H1 (cell line): ENCODE measurements at regions of chr4 and their contacts with region 1.

Region 1: DNA sequence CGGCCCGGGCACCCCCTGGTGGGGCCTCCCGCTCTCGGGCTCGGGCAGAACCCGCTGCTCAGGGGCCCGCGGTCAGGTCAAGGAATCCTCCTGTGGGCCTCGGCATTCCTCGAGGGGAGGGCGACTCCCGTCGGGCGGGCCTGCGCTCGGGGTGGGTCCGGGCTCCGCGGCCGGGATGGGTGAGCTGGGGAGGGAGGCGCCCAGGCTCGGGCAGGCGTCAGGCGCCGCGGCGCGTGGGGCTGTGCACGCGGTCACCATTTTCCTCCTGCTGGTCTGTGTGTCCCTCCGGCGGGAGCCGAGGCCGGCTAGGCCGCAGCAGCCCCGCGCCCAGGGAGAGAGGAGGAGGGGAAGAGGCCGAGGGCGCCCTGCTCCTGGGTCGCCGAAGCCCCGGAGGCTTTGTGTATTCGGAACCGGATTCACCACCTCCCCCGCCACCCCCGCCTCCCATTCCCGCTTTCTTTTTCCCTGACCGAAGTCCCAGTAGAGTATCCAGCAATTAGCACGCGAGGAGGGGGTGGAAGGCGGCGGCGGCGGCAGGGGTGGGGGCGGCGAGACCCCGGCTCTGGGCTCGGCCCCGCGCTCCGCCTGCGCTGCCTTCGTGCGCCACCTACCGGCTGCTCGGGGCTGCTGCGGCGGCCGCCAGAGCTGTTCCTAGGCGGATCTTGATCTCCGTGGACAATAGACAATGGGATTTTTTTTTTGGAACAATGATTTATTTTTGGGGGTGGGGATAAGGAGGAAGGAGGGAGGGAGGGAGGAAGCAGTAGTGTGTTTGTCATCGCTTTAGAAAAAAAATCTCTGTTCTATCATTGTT is 99.0 kb upstream of the MAML3 start:
- DNase-seq: peak in 1 of 2 experiments; percentile 87
- H3K4me3 ChIP-seq: peak overlapping the region; percentile 34 to 66 (median 38)
- H3K27ac ChIP-seq: no peak overlapping the region
- H3K4me1 ChIP-seq: peaks cover 0 to 10% (median 6%) of the 10 kb centered on the region in 4 experiments; a peak in 6 of 7 replicates
- H3K27me3 ChIP-seq: peaks cover 0 to 7% (median 4%) of the 10 kb centered on the region in 4 experiments; a peak in 3 of 7 replicates
- CTCF ChIP-seq: peak; percentile 79 to 94 (median 93)
- EP300 ChIP-seq: no peak
- POLR2A ChIP-seq: no peak
- RAD21 ChIP-seq: peak; percentile 86 to 91

Region 2: DNA sequence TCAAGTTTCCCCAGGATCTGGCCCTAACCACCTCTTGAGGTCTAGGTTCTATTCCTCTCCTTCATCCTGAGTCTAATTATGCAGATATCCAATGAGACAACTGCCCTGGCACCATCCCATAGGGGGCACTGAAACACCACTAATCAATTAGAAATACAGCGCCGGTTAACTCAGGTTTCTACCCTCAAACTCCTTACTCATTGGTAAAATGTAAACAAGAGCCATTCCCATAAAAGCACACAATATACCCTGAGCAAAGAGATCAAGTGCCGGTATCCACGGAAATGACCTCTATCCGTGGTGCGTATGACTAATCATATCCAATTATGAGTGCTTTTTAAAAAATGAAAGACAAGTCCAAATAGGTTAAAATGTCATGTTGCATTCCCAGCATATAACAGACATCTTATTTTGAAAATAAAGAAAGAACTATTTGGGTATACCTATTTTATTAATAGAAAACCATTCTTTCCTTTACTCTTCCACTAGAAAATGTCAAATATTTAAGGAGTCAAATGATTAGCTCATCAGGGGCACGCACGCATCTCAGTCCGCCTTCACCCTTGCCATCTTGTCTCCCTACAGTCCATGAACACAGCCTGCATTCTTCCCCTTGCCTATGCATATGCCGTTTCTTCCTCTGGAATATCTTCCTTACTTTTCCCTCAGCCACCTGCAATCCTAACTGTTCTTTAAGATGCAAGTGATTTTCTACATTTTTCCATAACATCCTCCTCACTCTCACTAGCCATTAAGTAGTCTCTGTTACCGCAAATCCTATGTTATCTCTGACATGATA is 240.1 kb before region 1 on chr4:
- CTCF ChIA-PET with region 1: interaction called, 28 read pairs
- POLR2A ChIA-PET with region 1: no interaction called
- DNase-seq: peak in 1 of 2 experiments; percentile 70
- H3K4me3 ChIP-seq: no peak overlapping the region
- H3K27ac ChIP-seq: no peak overlapping the region
- H3K4me1 ChIP-seq: peaks cover 0 to 6% (median 1%) of the 10 kb centered on the region in 4 experiments; a peak in 2 of 7 replicates
- H3K27me3 ChIP-seq: no peaks in the 10 kb centered on the region
- CTCF ChIP-seq: peak in 2 of 3 experiments; percentile 78 to 79; a peak in 3 of 4 replicates
- EP300 ChIP-seq: no peak
- POLR2A ChIP-seq: no peak
- RAD21 ChIP-seq: peak; percentile 92 to 96

Region 3: GRCh38 chr4:140153718-140154571 is 99.0 kb before region 1 on chr4 and contains the start of gene MAML3:
- CTCF ChIA-PET with region 1: interaction called, 10 read pairs
- POLR2A ChIA-PET with region 1: interaction called, 11 read pairs
- DNase-seq: peak; percentile 47 to 94
- H3K4me3 ChIP-seq: peak within 1 kb of the TSS; percentile 86 to 98 (median 94)
- H3K27ac ChIP-seq: no peak within 1 kb of the TSS
- H3K4me1 ChIP-seq: peaks cover 0 to 4% (median 2%) of the 10 kb centered on the region in 4 experiments; a peak in 4 of 7 replicates
- H3K27me3 ChIP-seq: peaks cover 0 to 3% (median 1%) of the 10 kb centered on the region in 4 experiments; a peak in 3 of 7 replicates
- CTCF ChIP-seq: no peak
- EP300 ChIP-seq: peak in 1 of 2 experiments; percentile 64; a peak in 1 of 3 replicates
- POLR2A ChIP-seq: no peak
- RAD21 ChIP-seq: peak in 1 of 2 experiments; percentile 37; a peak in 2 of 4 replicates
- total RNA-seq, gene MAML3: 5.6 and 5.7 TPM in 2 replicates

Region 4: DNA sequence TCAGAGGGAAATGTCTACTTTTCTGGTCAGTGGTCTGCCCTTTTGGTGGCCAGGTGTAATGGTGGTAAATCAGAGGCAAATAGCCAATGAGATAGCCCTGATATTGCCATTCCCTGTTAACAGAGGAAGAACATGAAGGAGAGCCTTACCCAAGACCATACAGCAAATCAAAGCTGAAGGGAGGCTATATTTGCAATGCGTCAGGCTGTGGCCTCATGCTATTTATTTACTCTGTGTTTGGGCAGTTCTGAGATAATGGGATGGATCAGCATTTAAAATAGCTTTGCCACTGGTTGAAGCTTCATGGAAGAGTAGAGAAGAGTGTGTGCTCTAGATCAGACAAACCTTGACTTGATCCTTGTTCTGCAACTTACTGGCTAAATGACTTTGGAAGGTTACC is 25.7 kb before region 1 on chr4:
- CTCF ChIA-PET with region 1: interaction called, 14 read pairs
- POLR2A ChIA-PET with region 1: no interaction called
- DNase-seq: peak in 1 of 2 experiments; percentile 16
- H3K4me3 ChIP-seq: no peak overlapping the region
- H3K27ac ChIP-seq: no peak overlapping the region
- H3K4me1 ChIP-seq: peaks cover 0 to 7% (median 4%) of the 10 kb centered on the region in 4 experiments; a peak in 3 of 7 replicates
- H3K27me3 ChIP-seq: no peaks in the 10 kb centered on the region
- CTCF ChIP-seq: no peak
- EP300 ChIP-seq: no peak
- POLR2A ChIP-seq: no peak
- RAD21 ChIP-seq: no peak

Region 5: GRCh38 chr4:140266991-140267426 is 14.1 kb after region 1 on chr4:
- CTCF ChIA-PET with region 1: interaction called, 18 read pairs
- POLR2A ChIA-PET with region 1: no interaction called
- DNase-seq: no peak
- H3K4me3 ChIP-seq: no peak overlapping the region
- H3K27ac ChIP-seq: no peak overlapping the region
- H3K4me1 ChIP-seq: peaks cover 0 to 6% (median under 1%) of the 10 kb centered on the region in 4 experiments; a peak in 2 of 7 replicates
- H3K27me3 ChIP-seq: no peaks in the 10 kb centered on the region
- CTCF ChIP-seq: no peak
- EP300 ChIP-seq: no peak
- POLR2A ChIP-seq: no peak
- RAD21 ChIP-seq: no peak